ENCODE measurements at regions of chr3 and their contacts with region 1.

Region 1: DNA sequence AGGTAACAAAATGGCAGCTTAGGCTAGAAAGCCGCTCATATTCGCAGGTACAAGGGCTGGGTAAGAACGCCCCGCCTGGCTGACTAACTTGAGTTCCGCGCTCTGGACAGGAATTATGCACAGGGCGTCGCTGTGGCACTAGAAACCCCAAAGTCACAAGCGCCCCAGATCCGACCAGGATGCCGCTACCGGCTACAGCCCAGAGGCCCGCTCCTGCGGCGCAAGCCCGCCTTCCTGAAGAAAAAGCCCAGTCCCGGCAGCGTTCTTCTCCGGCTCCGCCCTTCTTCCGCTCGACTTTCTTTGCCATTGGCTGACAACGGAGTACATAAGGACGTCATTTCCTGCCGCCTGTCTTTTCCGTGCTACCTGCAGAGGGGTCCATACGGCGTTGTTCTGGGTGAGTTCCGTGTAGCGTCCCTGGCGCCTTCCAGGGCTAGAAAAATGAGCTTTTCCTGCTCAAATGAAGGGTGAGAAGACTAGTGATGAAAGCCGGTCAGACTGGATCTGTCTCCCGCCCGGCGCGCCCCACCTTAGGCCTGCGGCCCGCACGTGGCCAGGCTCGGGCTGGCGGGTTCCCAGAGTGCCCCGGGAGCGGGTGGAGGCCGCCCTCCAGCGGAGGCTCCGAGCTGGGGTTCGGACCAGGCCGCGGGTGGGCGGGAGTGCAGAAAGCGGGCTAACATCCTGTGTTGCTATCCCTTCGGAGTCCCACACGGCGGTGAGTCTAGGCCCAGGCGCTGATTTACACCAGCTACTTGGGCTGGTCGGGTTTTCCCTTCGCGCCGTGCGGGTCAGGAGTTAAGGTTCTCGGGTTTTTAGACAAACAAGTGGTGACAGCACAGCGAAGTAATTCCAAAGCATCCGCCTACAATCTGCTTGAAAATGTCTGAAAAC is at the start of gene RPSA:
- DNase-seq: peak; percentile 94 to 96
- ATAC-seq: peak; percentile 96 to 97
- H3K4me3 ChIP-seq: peak within 1 kb of the TSS; percentile 98
- H3K27ac ChIP-seq: peak within 1 kb of the TSS; percentile 94 to 95
- H3K4me1 ChIP-seq: peaks cover 35% of the 10 kb centered on the region
- CTCF ChIP-seq: peak; percentile 5; the same call in 1 of the 3 replicates
- EP300 ChIP-seq: no peak
- POLR2A ChIP-seq: peak; percentile 96
- RAD21 ChIP-seq: peak; percentile 16 to 30; a peak in 3 of 5 replicates
- polyA plus RNA-seq, gene RPSA: 3,141 and 4,058 TPM in 2 replicates

Region 2: GRCh38 chr3:39383881-39384664 is 22.5 kb before region 1 on chr3:
- CTCF ChIA-PET with region 1: interaction called, 4 read pairs
- POLR2A ChIA-PET with region 1: interaction called, 10 read pairs
- DNase-seq: peak; percentile 93 to 98
- ATAC-seq: peak; percentile 92 to 95
- H3K4me3 ChIP-seq: peak overlapping the region; percentile 85
- H3K27ac ChIP-seq: peak overlapping the region; percentile 89 to 92
- H3K4me1 ChIP-seq: peaks cover 18% of the 10 kb centered on the region; the same call in 2 of the 3 replicates
- CTCF ChIP-seq: no peak
- EP300 ChIP-seq: no peak
- POLR2A ChIP-seq: peak; percentile 81
- RAD21 ChIP-seq: no peak

Region 3: DNA sequence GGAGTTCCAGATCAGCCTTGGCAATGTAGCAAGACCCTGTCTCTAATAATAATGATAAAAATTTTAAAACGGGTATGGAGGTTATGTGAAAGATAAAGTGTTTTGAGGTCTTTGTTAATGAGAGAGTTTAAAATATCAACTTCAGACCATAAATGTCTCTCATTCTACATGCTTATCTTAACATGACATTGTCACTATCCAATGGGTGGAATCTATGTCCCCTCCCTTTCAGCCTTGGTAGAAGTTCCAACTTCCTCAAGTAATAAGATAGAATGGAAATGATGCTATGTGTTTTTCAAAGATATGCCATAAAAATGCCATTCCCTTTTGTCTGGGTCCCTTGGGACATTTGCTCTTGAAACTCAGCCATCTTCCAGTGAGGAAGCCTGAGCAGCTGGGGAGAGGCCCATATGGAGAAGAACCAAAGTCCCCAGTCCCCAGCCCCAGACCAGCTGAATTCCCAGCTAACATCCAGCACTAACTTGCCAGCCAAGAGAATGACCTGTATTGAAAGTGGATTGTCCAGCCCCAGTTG is 16.9 kb after region 1 on chr3:
- CTCF ChIA-PET with region 1: no interaction called
- POLR2A ChIA-PET with region 1: interaction called, 11 read pairs
- DNase-seq: no peak
- ATAC-seq: no peak
- H3K4me3 ChIP-seq: no peak overlapping the region
- H3K27ac ChIP-seq: no peak overlapping the region
- H3K4me1 ChIP-seq: no peaks in the 10 kb centered on the region
- CTCF ChIP-seq: no peak
- EP300 ChIP-seq: no peak
- POLR2A ChIP-seq: no peak
- RAD21 ChIP-seq: no peak

Region 4: DNA sequence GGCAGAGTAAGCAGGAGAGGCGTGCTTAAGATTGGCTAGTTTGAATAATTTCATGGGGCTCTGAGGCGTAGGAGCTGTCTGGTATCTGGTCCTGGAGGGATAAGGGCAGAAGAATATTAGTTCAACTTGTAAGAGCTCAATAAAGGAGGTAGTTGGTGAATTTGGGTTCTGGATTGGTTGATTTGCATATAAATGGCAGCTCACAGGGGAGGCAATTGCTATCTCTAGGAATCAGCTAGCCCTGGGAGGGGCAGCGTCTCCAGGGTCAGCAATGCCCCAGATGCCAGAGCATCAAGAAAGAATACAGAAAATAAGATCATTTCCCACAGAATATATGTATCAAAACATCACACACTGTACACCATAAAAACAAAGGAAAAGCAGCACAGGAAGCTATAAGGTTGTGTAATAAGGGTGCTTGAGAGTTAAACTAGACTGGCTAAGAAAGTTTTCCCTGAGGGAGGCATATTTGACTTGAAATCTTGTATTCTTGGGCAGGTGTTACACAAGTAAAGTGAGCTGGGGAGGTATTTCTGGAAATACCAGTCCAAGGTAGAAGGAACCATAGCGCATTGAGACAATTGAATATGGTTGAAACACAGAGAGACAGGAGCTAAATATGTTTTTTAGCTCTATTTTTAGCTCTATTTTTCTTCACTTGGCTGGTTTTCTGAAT is 67.0 kb after region 1 on chr3:
- CTCF ChIA-PET with region 1: no interaction called
- POLR2A ChIA-PET with region 1: no interaction called
- DNase-seq: no peak
- ATAC-seq: no peak
- H3K4me3 ChIP-seq: no peak overlapping the region
- H3K27ac ChIP-seq: no peak overlapping the region
- H3K4me1 ChIP-seq: no peaks in the 10 kb centered on the region
- CTCF ChIP-seq: no peak
- EP300 ChIP-seq: no peak
- POLR2A ChIP-seq: no peak
- RAD21 ChIP-seq: no peak

Measured in A549 (cell line).